ENCODE measurements at regions of chr3 and their contacts with region 1.

Region 1: GRCh38 chr3:45986303-45986982 is 9.2 kb downstream of the FYCO1 start:
- DNase-seq: no peak
- H3K4me3 ChIP-seq: no peak overlapping the region
- H3K27ac ChIP-seq: no peak overlapping the region
- H3K4me1 ChIP-seq: no peaks in the 10 kb centered on the region
- CTCF ChIP-seq: no peak

Region 2: DNA sequence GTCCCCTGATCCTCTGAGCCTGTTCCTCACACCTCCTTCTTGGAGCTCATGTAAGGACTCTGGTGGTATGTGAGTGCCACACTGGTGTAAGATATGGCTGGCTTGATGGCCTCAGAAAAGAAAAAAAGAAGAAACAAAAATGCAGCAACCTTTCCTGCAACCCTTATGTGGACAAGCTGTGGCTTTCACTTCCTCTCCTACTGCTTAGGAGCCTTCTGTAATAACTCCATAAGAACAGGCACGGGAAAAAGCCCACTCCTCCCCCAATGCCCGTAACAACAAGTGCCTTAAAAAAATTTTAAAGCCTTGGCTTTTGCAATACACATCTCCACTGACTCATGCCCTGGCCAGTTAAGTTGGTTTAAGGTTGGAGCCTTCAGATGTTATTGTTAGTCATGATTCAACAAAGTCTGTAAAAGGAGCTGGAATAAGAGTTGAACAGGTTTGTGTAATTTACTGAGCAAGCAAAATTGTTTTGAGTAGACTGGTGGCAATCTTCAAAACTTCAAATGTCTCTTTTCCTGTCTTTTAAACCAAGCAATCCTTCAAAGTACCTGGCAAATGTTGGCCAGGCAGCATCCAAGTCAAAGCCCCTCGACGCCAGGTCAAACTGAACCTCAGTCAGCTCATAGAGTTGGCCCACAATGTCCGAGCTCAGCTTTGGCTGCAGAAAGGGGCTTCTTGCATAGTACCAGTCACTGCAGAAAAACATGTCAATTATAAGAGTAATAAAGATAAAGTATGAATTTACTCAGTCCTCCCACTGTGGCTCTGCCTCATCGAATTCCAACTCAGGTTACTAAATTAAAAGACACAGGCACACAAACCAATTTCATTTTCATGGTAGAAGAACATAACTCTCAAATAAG is 13.7 kb before region 1 on chr3:
- CTCF ChIA-PET with region 1: no interaction called
- POLR2A ChIA-PET with region 1: interaction called, 10 read pairs
- intact Hi-C with region 1: no loop called
- DNase-seq: peak; percentile 43
- H3K4me3 ChIP-seq: no peak overlapping the region
- H3K27ac ChIP-seq: peak overlapping the region; percentile 4
- H3K4me1 ChIP-seq: peaks cover 12% of the 10 kb centered on the region
- CTCF ChIP-seq: no peak

Region 3: GRCh38 chr3:46312991-46313390 is 326.5 kb after region 1 on chr3:
- CTCF ChIA-PET with region 1: no interaction called
- POLR2A ChIA-PET with region 1: no interaction called
- intact Hi-C with region 1: no loop called
- DNase-seq: no peak
- H3K4me3 ChIP-seq: no peak overlapping the region
- H3K27ac ChIP-seq: no peak overlapping the region
- H3K4me1 ChIP-seq: no peaks in the 10 kb centered on the region
- CTCF ChIP-seq: no peak